ENCODE measurements at regions of chr12 and their contacts with region 1.

Region 1: GRCh38 chr12:105107494-105108371 is at the start of gene WASHC4:
- DNase-seq: peak; percentile 89 to 92 (median 90)
- H3K4me3 ChIP-seq: peak within 1 kb of the TSS; percentile 79 to 100 (median 97)
- H3K4me3 Mint-ChIP-seq: peak within 1 kb of the TSS; percentile 93 to 99
- H3K27ac ChIP-seq: peak within 1 kb of the TSS; percentile 98 to 100
- H3K27ac Mint-ChIP-seq: peak within 1 kb of the TSS; percentile 95 to 98 (median 97)
- H3K4me1 ChIP-seq: peaks cover 14 to 44% of the 10 kb centered on the region in 2 donors
- H3K4me1 Mint-ChIP-seq: peaks cover 38% of the 10 kb centered on the region
- H3K27me3 ChIP-seq: peaks cover 7 to 11% of the 10 kb centered on the region in 2 donors
- H3K27me3 Mint-ChIP-seq: peaks cover 1 to 6% (median 4%) of the 10 kb centered on the region in 3 donors
- CTCF ChIP-seq: no peak
- polyA plus RNA-seq, gene WASHC4: 62.6 to 95.3 (median 69.0) TPM

Region 2: GRCh38 chr12:103956516-103957027 is 1151.2 kb before region 1 on chr12:
- intact Hi-C with region 1: loop called (anchors 10 kb)
- DNase-seq: no peak
- H3K4me3 ChIP-seq: peak overlapping the region; percentile 71 to 88 (median 86)
- H3K4me3 Mint-ChIP-seq: peak overlapping the region; percentile 88 to 94
- H3K27ac ChIP-seq: peak overlapping the region; percentile 67 to 85
- H3K27ac Mint-ChIP-seq: peak overlapping the region; percentile 93 to 99 (median 96)
- H3K4me1 ChIP-seq: peaks cover 13 to 18% of the 10 kb centered on the region in 2 donors
- H3K4me1 Mint-ChIP-seq: peaks cover 15% of the 10 kb centered on the region
- H3K27me3 ChIP-seq: no peaks in the 10 kb centered on the region
- H3K27me3 Mint-ChIP-seq: peaks cover 0 to 2% (median 2%) of the 10 kb centered on the region in 3 donors
- CTCF ChIP-seq: no peak

Region 3: DNA sequence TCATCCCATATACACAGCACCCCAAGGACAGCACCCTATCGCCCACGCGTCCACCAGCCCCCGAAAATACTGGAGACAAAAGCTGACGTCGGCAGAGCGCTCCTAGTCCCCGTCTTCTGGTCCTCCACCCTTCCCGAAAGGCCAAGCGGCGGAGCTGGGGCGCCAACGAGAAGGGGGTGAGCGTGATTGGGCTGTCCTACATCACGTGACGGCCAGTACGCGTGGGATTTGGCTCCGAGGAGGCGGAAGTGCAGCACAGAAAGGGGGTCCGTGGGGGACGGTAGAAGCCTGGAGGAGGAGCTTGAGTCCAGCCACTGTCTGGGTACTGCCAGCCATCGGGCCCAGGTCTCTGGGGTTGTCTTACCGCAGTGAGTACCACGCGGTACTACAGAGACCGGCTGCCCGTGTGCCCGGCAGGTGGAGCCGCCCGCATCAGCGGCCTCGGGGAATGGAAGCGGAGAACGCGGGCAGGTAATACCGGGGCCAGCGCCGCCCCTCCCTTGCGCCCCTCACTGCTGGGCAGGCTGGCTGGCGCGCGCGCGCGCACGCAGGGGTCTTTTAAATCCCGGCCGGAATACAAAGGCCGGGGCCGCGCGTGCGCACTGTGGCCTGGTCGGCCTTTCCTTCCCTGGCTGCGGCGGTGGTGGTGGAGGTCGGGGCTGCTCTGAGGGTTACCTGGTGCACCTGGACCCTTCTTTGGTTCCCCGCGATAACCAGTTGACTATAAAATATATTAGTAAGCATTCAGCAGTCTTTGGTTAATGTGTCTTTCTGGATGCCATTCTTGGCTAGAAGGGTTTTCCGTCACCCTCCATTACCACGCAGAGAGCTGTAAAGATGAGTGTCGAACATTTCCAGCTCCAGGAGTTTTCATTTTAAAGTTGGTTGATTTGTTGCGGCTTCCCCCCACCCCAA is 1141.9 kb before region 1 on chr12 and contains the start of gene TDG:
- intact Hi-C with region 1: loop called in 1 of 2 experiments (anchors 10 kb)
- DNase-seq: peak; percentile 93 to 97 (median 96)
- H3K4me3 ChIP-seq: peak within 1 kb of the TSS; percentile 56 to 95 (median 84)
- H3K4me3 Mint-ChIP-seq: peak within 1 kb of the TSS; percentile 93 to 97
- H3K27ac ChIP-seq: peak within 1 kb of the TSS; percentile 74 to 92
- H3K27ac Mint-ChIP-seq: peak within 1 kb of the TSS; percentile 94 to 98 (median 97)
- H3K4me1 ChIP-seq: peaks cover 20 to 28% of the 10 kb centered on the region in 2 donors
- H3K4me1 Mint-ChIP-seq: peaks cover 31% of the 10 kb centered on the region
- H3K27me3 ChIP-seq: no peaks in the 10 kb centered on the region
- H3K27me3 Mint-ChIP-seq: peaks cover 0 to 2% (median 0%) of the 10 kb centered on the region in 3 donors
- CTCF ChIP-seq: peak; percentile 8
- polyA plus RNA-seq, gene TDG: 12.6 to 22.4 (median 20.1) TPM

Region 4: GRCh38 chr12:104303538-104304151 is 804.1 kb before region 1 on chr12 and contains the start of gene EID3:
- intact Hi-C with region 1: loop called in 1 of 2 experiments (anchors 10 kb)
- DNase-seq: peak; percentile 78 to 82 (median 80)
- H3K4me3 ChIP-seq: peak within 1 kb of the TSS; percentile 44 to 77 (median 46)
- H3K4me3 Mint-ChIP-seq: peak within 1 kb of the TSS; percentile 97 to 98
- H3K27ac ChIP-seq: peak within 1 kb of the TSS; percentile 59 to 70
- H3K27ac Mint-ChIP-seq: peak within 1 kb of the TSS; percentile 77 to 95 (median 92)
- H3K4me1 ChIP-seq: peaks cover 26 to 40% of the 10 kb centered on the region in 2 donors
- H3K4me1 Mint-ChIP-seq: peaks cover 57% of the 10 kb centered on the region
- H3K27me3 ChIP-seq: no peaks in the 10 kb centered on the region
- H3K27me3 Mint-ChIP-seq: no peaks in the 10 kb centered on the region
- CTCF ChIP-seq: no peak
- polyA plus RNA-seq, gene EID3: 0.64 to 1.0 (median 0.65) TPM

Region 5: GRCh38 chr12:104921340-104921739 is 186.4 kb before region 1 on chr12:
- intact Hi-C with region 1: no loop called
- DNase-seq: no peak
- H3K4me3 ChIP-seq: no peak overlapping the region
- H3K4me3 Mint-ChIP-seq: no peak overlapping the region
- H3K27ac ChIP-seq: no peak overlapping the region
- H3K27ac Mint-ChIP-seq: no peak overlapping the region
- H3K4me1 ChIP-seq: no peaks in the 10 kb centered on the region
- H3K4me1 Mint-ChIP-seq: no peaks in the 10 kb centered on the region
- H3K27me3 ChIP-seq: no peaks in the 10 kb centered on the region
- H3K27me3 Mint-ChIP-seq: peaks cover 0 to 2% (median 0%) of the 10 kb centered on the region in 3 donors
- CTCF ChIP-seq: no peak

Region 6: DNA sequence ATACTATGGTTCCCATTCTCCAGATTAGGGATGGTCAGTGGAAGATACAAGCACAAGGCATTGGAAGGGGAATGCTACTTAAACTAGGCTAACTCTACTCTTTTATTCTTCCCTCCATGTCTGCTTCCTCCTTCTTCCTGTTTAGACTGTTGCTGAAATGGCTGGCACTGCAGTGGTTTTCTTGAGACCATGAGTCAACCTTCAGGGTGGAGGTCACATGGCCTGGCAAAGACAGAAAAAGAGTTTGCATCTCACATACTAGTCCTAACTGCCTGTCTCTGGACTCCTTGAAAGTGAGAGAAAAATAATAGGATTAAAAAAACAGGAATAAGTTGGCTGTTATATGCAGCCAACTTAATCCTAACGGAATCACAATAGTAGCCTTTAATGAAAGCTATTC is 60.4 kb before region 1 on chr12:
- intact Hi-C with region 1: no loop called
- DNase-seq: peak in 1 of 3 donors; percentile 12
- H3K4me3 ChIP-seq: no peak overlapping the region
- H3K4me3 Mint-ChIP-seq: no peak overlapping the region
- H3K27ac ChIP-seq: no peak overlapping the region
- H3K27ac Mint-ChIP-seq: no peak overlapping the region
- H3K4me1 ChIP-seq: no peaks in the 10 kb centered on the region
- H3K4me1 Mint-ChIP-seq: no peaks in the 10 kb centered on the region
- H3K27me3 ChIP-seq: no peaks in the 10 kb centered on the region
- H3K27me3 Mint-ChIP-seq: no peaks in the 10 kb centered on the region
- CTCF ChIP-seq: no peak

Region 7: GRCh38 chr12:105279460-105280056 is 171.8 kb after region 1 on chr12:
- intact Hi-C with region 1: no loop called
- DNase-seq: peak in 2 of 3 donors; percentile 14 to 17
- H3K4me3 ChIP-seq: no peak overlapping the region
- H3K4me3 Mint-ChIP-seq: no peak overlapping the region
- H3K27ac ChIP-seq: no peak overlapping the region
- H3K27ac Mint-ChIP-seq: no peak overlapping the region
- H3K4me1 ChIP-seq: no peaks in the 10 kb centered on the region
- H3K4me1 Mint-ChIP-seq: peaks cover 5% of the 10 kb centered on the region
- H3K27me3 ChIP-seq: no peaks in the 10 kb centered on the region
- H3K27me3 Mint-ChIP-seq: peaks cover 0 to 5% (median 3%) of the 10 kb centered on the region in 3 donors
- CTCF ChIP-seq: peak; percentile 85

Region 8: DNA sequence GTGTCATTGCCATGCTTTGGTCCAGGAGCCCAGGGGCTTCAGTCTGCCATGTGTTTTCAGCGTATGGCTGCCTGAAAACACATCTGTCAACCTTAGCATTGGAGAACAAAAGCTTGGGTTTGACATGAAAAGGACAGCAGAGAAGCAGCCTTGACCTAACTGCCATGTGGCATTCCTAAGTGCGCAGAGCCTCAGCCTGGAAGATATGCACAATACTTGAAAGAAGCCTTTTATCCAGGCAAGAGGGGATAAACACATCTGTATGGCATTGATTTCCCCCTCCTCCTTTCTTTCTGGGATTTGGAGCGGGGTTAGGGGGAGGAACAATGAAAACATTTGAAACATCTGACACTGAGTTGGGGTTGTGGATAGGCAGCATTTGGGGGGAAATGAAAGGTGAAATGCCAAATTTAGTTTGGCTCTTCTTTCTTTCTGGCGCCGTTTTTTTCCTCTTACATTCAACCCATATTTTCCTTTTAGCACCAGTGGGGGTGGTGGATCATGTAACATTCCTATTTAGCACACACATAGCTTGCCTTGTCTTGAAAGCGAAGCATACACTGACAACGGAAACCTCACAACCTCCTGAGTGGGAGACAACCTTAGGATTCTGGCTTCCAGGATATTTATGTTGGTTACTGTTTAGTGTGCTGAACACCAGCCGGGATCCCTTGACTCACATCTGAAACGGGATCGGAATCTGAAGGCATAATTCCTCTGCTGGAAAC is 399.7 kb after region 1 on chr12:
- intact Hi-C with region 1: no loop called
- DNase-seq: no peak
- H3K4me3 ChIP-seq: no peak overlapping the region
- H3K4me3 Mint-ChIP-seq: no peak overlapping the region
- H3K27ac ChIP-seq: no peak overlapping the region
- H3K27ac Mint-ChIP-seq: no peak overlapping the region
- H3K4me1 ChIP-seq: no peaks in the 10 kb centered on the region
- H3K4me1 Mint-ChIP-seq: no peaks in the 10 kb centered on the region
- H3K27me3 ChIP-seq: no peaks in the 10 kb centered on the region
- H3K27me3 Mint-ChIP-seq: peaks cover 0 to 10% (median 5%) of the 10 kb centered on the region in 3 donors
- CTCF ChIP-seq: no peak

Measured in CD14-positive monocyte (primary cell).